Cardiac septum (tissue), 1 donor: ENCODE measurements at regions of chr1 and their contacts with region 1.

Region 1: DNA sequence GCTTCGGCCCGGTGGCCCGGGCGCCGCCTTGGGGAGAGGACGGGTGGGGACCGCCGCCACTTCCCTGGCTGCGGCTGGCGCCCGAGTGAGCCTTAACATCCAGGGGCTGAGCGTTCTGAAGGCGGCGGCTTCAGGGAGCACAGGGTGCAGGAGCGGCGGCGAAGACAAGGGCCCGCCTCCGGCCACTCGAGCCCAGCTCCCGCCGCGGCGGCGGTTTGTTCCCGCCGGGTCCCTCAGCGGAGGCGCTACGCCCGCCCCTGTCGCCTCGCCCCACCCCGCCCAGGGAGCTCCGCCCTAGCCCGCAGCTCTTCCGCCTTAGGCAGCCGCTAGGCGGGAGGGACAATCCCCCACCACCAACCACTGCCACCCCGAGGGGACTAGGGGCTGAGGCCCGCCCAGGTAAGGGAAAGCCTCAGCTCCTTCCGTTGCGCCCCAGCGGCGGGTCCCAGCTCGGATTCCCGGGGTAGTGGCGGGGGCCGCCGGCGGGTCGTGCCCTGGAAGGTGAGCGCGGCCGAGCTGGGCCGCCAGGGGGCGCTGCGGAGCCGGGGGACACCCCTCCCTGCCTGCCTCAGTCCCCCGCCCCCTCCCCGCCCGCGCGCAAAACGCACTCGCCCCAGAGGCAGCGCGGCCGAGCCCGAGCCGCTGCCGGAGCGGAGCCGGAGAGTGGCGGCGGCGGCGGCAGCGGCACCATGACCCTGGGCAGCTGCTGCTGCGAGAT is at the start of gene FOXD2:
- DNase-seq: peak; percentile 92
- total RNA-seq, gene FOXD2: 0.08 TPM

Region 2: GRCh38 chr1:47179017-47179987 is 258.3 kb before region 1 on chr1:
- intact Hi-C with region 1: loop called (anchors 5 kb)
- DNase-seq: peak; percentile 87

Region 3: DNA sequence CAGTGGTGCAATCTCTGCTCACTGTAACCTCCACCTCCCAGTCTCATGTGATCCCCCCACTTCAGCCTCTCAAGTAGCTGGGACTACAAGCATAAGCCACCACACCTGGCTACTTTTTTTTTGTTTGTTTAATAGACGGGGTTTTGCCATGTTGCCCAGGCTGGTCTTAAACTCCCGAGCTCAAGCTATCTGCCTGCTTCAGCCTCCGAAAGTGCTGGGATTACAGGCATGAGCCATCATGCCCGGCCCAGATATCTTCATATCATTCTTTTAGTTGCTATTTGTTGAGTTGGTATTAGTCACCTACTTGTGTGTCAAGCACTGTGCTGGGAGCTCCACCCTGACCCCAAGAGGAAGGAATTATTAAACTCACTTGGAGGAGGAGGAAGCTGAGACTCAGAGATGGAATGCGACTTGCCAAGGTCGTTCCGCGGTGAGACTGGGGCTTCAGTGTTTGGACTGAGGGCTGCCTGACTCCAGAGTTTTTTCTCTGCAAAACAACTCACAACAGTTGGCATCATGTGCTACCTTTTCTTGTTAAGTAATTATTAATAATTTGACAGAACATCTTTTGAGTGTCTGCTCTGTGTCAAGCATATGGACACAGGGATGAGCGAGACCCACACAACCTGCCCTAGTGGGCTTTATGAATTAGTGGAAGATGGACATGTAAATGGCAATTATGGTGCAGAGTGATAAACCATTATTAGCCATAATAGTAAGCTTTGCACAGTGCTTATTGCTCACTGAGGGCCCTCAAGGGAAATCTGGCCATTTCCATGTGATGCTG is 132.3 kb after region 1 on chr1:
- intact Hi-C with region 1: loop called (anchors 5 kb)
- DNase-seq: no peak